CD8-positive, alpha-beta T cell (primary cell): ENCODE measurements at regions of chr10 and their contacts with region 1.

Region 1: DNA sequence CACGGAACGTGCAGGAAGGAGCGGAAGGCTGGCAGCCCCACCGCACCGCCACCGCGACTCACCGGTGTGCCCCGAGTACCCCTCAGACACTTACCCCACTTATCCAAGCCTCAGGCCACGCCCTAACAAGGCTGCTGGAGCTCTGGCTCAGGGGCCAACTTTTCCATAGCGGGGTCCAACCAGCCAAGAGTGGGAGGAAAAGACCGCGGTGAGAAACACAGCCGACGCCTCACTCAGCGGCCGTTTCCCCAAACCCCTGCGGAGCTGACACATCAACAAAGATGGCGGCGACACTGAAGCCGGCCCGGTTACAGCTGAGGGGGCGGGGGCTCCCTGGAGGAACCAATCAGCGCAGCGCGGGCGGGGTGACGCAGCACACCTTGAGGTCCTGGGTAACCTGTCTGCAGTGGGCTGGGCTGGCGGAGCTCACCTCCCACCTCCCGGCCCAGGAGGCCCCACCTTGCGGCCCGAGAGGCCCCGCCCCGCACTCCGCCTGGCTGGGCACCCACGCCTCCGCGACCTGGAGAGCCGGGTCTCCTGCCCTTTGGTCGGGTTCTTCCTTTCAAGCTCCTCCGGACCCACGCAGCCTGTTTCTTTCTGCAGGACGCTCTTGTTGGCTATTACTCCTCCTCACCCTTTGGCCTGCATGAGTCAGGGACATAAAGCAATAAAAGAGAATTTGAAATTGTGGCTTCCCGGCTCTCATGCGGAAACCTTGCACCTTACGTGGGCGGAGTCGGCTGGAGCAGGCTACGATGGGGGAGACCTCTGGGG is at the start of gene CCDC186:
- DNase-seq: peak; percentile 97 to 99 (median 98)
- ATAC-seq: peak; percentile 97
- H3K4me3 ChIP-seq: peak within 1 kb of the TSS; percentile 73 to 97
- H3K4me3 Mint-ChIP-seq: peak within 1 kb of the TSS; percentile 94
- H3K27ac ChIP-seq: peak within 1 kb of the TSS; percentile 82 to 92
- H3K27ac Mint-ChIP-seq: peak within 1 kb of the TSS; percentile 98
- H3K4me1 ChIP-seq: peaks cover 11% of the 10 kb centered on the region
- H3K4me1 Mint-ChIP-seq: peaks cover 48% of the 10 kb centered on the region
- H3K27me3 ChIP-seq: no peaks in the 10 kb centered on the region
- H3K27me3 Mint-ChIP-seq: peaks cover 2% of the 10 kb centered on the region
- CTCF ChIP-seq: no peak
- total RNA-seq, gene CCDC186: 57.9 to 67.7 TPM

Region 2: GRCh38 chr10:112446855-112447711 is 1727.0 kb before region 1 on chr10 and contains the starts of genes VTI1A and ZDHHC6:
- CTCF ChIA-PET with region 1: no interaction called
- POLR2A ChIA-PET with region 1: no interaction called
- intact Hi-C with region 1: loop called in 1 of 2 experiments (anchors 5 kb)
- DNase-seq: peak; percentile 68 to 92 (median 85)
- ATAC-seq: peak; percentile 88
- H3K4me3 ChIP-seq: peak within 1 kb of the TSS; percentile 93 to 96
- H3K4me3 Mint-ChIP-seq: peak within 1 kb of the TSS; percentile 94
- H3K27ac ChIP-seq: peak within 1 kb of the TSS; percentile 91 to 92
- H3K27ac Mint-ChIP-seq: peak within 1 kb of the TSS; percentile 95
- H3K4me1 ChIP-seq: peaks cover 24% of the 10 kb centered on the region
- H3K4me1 Mint-ChIP-seq: peaks cover 66% of the 10 kb centered on the region
- H3K27me3 ChIP-seq: no peaks in the 10 kb centered on the region
- H3K27me3 Mint-ChIP-seq: no peaks in the 10 kb centered on the region
- CTCF ChIP-seq: no peak
- total RNA-seq, gene VTI1A: 59.0 to 62.7 TPM
- total RNA-seq, gene ZDHHC6: 41.4 to 41.7 TPM

Region 3: GRCh38 chr10:113678690-113679462 is 495.2 kb before region 1 on chr10:
- CTCF ChIA-PET with region 1: no interaction called
- POLR2A ChIA-PET with region 1: interaction called, 6 read pairs
- intact Hi-C with region 1: loop called (anchors 2 to 5 kb)
- DNase-seq: peak; percentile 39 to 78 (median 69)
- ATAC-seq: peak; percentile 30
- H3K4me3 ChIP-seq: peak overlapping the region; percentile 94 to 95
- H3K4me3 Mint-ChIP-seq: peak overlapping the region; percentile 96
- H3K27ac ChIP-seq: peak overlapping the region; percentile 84 to 88
- H3K27ac Mint-ChIP-seq: peak overlapping the region; percentile 62
- H3K4me1 ChIP-seq: peaks cover 24% of the 10 kb centered on the region
- H3K4me1 Mint-ChIP-seq: peaks cover 41% of the 10 kb centered on the region
- H3K27me3 ChIP-seq: no peaks in the 10 kb centered on the region
- H3K27me3 Mint-ChIP-seq: peaks cover 3% of the 10 kb centered on the region
- CTCF ChIP-seq: peak; percentile 46

Region 4: DNA sequence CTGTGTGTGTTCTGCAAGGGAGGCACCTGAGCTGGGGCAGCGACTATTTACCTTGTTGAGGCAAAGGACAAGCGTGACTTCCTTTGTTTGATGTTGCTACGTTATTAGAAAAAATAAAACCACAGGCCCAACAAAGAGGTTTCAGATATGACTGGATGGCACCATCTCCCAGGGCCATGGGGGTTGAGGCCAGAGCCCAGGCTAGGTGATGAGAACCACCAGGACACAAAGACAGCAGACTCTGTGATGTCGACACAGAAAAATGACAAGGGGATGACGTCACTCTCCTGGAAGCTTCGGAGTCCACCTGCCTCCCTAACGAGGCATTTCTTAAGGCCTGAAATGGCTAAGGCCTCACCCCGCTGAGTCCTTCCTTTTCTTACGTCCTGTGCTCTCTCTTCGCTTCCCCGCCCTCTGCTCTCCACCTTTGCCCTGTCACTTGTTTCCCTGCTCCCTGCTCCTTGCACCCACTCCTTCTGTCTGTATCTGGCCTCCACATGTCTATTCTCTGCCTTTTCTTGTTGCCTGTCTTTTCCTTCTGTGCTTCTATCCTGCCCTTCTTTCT is 213.4 kb before region 1 on chr10:
- CTCF ChIA-PET with region 1: no interaction called
- POLR2A ChIA-PET with region 1: no interaction called
- intact Hi-C with region 1: loop called in 1 of 2 experiments (anchors 1 kb)
- DNase-seq: peak in 7 of 9 experiments; percentile 13 to 86 (median 56)
- ATAC-seq: peak; percentile 22
- H3K4me3 ChIP-seq: peak overlapping the region in 1 of 2 experiments; percentile 17
- H3K4me3 Mint-ChIP-seq: peak overlapping the region; percentile 46
- H3K27ac ChIP-seq: peak overlapping the region; percentile 20 to 68
- H3K27ac Mint-ChIP-seq: peak overlapping the region; percentile 83
- H3K4me1 ChIP-seq: peaks cover 36% of the 10 kb centered on the region
- H3K4me1 Mint-ChIP-seq: peaks cover 37% of the 10 kb centered on the region
- H3K27me3 ChIP-seq: no peaks in the 10 kb centered on the region
- H3K27me3 Mint-ChIP-seq: peaks cover 9% of the 10 kb centered on the region
- CTCF ChIP-seq: no peak

Region 5: GRCh38 chr10:114294549-114294948 is 120.4 kb after region 1 on chr10:
- CTCF ChIA-PET with region 1: no interaction called
- POLR2A ChIA-PET with region 1: no interaction called
- intact Hi-C with region 1: no loop called
- DNase-seq: no peak
- ATAC-seq: no peak
- H3K4me3 ChIP-seq: no peak overlapping the region
- H3K4me3 Mint-ChIP-seq: no peak overlapping the region
- H3K27ac ChIP-seq: no peak overlapping the region
- H3K27ac Mint-ChIP-seq: no peak overlapping the region
- H3K4me1 ChIP-seq: no peaks in the 10 kb centered on the region
- H3K4me1 Mint-ChIP-seq: no peaks in the 10 kb centered on the region
- H3K27me3 ChIP-seq: no peaks in the 10 kb centered on the region
- H3K27me3 Mint-ChIP-seq: no peaks in the 10 kb centered on the region
- CTCF ChIP-seq: no peak

Region 6: GRCh38 chr10:114541081-114541796 is 367.1 kb after region 1 on chr10:
- CTCF ChIA-PET with region 1: no interaction called
- POLR2A ChIA-PET with region 1: no interaction called
- intact Hi-C with region 1: loop called (anchors 2 to 5 kb)
- DNase-seq: peak; percentile 60 to 97 (median 79)
- ATAC-seq: peak; percentile 79
- H3K4me3 ChIP-seq: peak overlapping the region in 1 of 2 experiments; percentile 6
- H3K4me3 Mint-ChIP-seq: peak overlapping the region; percentile 53
- H3K27ac ChIP-seq: peak overlapping the region; percentile 88 to 93
- H3K27ac Mint-ChIP-seq: peak overlapping the region; percentile 99
- H3K4me1 ChIP-seq: peaks cover 91% of the 10 kb centered on the region
- H3K4me1 Mint-ChIP-seq: peaks cover 97% of the 10 kb centered on the region
- H3K27me3 ChIP-seq: no peaks in the 10 kb centered on the region
- H3K27me3 Mint-ChIP-seq: no peaks in the 10 kb centered on the region
- CTCF ChIP-seq: no peak

Region 7: GRCh38 chr10:114937962-114938855 is 764.1 kb after region 1 on chr10 and contains the start of gene TRUB1:
- CTCF ChIA-PET with region 1: no interaction called
- POLR2A ChIA-PET with region 1: interaction called, 3 read pairs
- intact Hi-C with region 1: loop called (anchors 1 to 2 kb)
- DNase-seq: peak; percentile 75 to 97 (median 90)
- ATAC-seq: peak; percentile 100
- H3K4me3 ChIP-seq: peak within 1 kb of the TSS; percentile 85 to 88
- H3K4me3 Mint-ChIP-seq: peak within 1 kb of the TSS; percentile 96
- H3K27ac ChIP-seq: peak within 1 kb of the TSS; percentile 73 to 91
- H3K27ac Mint-ChIP-seq: peak within 1 kb of the TSS; percentile 97
- H3K4me1 ChIP-seq: peaks cover 15% of the 10 kb centered on the region
- H3K4me1 Mint-ChIP-seq: peaks cover 37% of the 10 kb centered on the region
- H3K27me3 ChIP-seq: no peaks in the 10 kb centered on the region
- H3K27me3 Mint-ChIP-seq: no peaks in the 10 kb centered on the region
- CTCF ChIP-seq: no peak
- total RNA-seq, gene TRUB1: 7.7 to 9.7 TPM